GM10248 (cell line): ENCODE measurements at regions of chr11 and their contacts with region 1.

Region 1: DNA sequence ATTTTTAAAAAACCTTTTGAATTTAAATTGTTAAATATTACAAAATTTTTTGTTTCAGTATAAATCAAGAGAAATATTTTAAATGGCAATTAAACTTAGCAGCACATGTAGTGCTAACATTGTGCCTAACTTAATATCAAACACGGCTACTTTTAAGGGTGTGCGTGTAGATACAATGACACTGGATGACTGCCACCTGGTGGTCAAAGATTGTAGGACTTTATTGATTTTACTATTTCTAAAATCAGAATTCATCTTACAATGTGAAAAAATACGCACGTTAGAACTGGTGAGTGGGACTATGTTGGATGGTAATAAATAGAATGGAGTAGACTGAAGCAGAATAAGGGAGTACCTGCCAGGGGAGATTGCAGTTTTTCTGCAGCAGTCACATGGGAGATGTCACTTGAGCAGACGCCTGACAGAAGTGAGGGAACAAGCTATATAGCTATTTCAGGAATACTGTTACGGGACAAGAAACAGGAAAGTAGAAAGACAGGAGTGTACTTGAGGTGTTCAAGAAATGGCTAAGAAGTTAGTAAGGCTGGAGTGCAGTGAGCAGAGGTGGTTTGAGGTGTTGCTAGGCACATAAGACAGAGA is 52.9 kb downstream of the UVRAG start:
- DNase-seq: peak; percentile 42
- CTCF ChIP-seq: peak; percentile 47

Region 2: DNA sequence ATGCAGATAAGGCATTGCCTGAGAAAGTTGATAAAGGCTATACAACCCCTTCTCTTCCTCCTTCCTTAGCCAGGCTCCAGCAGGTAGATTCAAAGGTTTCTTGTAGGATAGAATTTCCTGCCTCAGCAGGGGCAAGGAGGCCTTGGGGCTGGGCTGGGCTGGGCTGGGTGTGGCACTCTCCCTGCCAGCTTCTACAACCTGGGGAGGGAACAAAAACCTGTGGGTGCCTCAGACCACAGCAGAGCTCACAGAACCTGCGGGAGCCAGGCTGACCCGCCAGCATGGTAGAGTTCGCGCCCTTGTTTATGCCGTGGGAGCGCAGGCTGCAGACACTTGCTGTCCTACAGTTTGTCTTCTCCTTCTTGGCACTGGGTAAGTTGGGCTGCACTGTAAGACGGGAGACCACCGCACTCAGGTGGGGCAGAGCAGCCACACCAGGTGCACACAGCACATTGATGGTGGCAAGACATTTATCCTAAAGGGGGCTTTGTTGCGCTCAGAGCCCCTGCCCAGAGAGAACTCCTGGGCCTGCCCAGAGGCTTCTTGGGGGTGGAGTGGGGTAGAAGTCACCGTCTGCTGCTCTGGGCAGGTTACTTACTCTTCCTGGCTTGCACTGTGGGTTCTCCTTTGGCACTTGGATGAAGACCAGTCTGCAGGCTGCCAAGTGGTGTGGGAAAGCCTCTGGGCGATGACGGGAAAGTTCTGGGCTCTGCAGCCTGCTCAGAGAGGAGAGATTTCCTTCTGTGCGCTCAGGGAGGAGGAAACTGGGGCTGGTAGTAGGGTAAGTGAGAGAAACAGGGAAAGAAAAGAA is 150.1 kb before region 1 on chr11 and contains the start of gene MOGAT2:
- CTCF ChIA-PET with region 1: interaction called, 19 read pairs
- POLR2A ChIA-PET with region 1: no interaction called
- DNase-seq: no peak
- CTCF ChIP-seq: no peak

Region 3: GRCh38 chr11:75786101-75786736 is 81.7 kb before region 1 on chr11:
- CTCF ChIA-PET with region 1: interaction called, 16 read pairs
- POLR2A ChIA-PET with region 1: no interaction called
- DNase-seq: peak; percentile 65
- CTCF ChIP-seq: no peak

Region 4: DNA sequence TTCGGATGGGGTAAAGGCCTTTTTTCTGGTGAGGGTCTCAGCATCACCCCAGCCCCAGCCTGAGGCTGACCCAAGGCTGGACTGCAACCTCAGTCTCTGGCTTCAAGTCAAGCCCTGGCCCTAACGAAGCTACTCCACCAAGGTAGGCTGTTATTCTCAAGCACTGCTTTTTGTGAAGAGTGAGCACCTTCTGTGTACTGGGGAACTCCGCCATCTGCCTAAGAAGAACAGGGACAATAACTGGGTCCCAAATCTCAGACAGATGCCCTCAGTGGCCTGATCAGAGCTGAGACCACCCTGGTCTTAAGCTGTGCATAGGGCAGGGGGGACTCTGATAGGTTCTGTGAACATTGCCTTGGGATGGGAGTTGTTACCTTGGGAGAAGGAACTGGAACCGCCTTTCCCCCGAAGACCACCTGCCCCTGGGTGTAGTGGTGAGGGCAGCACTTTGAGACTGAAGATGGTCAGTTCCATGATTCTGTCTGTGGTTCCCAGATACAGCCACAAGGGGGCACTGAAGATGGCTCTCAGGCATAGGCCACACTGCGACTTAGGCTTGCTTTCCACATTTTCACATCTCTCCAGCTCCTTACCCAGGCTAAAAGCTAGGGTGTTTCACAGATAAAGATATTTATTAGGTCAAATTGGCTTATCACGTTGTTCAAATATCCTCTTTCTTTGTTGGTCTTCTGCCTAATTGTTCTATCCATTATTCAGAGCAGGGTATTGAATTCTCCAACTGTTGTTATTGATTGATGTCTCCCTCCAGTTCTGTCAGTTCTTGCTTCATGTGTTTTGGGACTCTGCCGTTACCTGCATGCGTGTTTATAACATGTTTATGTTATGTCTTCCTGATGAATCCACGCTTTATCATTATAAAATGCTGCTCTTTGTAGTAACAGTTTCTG is 64.7 kb before region 1 on chr11:
- CTCF ChIA-PET with region 1: interaction called, 167 read pairs
- POLR2A ChIA-PET with region 1: no interaction called
- DNase-seq: peak; percentile 81
- CTCF ChIP-seq: peak; percentile 88

Region 5: GRCh38 chr11:75814686-75815344 is 53.1 kb before region 1 on chr11 and contains the start of gene UVRAG:
- CTCF ChIA-PET with region 1: interaction called, 59 read pairs
- POLR2A ChIA-PET with region 1: no interaction called
- DNase-seq: peak; percentile 96
- CTCF ChIP-seq: no peak

Region 6: DNA sequence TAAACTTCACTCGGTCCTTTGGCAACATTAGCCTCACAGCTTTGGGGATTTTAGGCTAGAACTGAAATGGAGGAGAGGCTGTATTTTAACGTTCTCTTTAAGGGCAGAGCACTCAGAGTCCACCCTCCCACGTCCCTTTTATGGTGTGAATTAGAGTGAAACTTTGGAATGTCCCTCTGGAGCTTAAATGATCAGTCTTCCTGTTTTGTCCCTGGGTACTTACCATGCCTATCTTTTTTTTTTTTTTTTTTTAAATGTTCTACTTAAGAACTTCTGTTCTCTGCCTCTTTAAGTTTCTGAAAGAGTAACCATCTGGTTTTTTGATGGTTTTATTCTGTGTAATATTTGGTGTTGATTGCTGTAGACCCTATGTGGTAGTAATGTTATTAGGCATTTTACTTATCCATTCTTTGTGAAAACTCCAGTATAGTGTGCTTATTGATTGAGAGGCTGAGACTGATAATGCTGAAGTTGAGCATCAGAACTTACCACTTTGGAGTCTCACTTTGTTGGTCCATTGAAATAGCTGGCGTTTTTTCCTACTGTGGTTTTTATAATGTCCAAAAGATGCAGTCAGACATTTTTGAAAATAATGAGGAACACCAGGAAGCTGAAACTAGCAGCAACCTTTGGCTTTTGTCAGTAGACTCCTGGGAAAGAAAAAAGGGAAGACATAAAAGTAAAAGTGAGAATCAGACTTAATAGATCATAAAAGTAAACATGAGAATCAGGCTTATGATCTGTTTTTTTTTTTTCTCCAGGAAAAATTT is 41.2 kb before region 1 on chr11:
- CTCF ChIA-PET with region 1: interaction called, 11 read pairs
- POLR2A ChIA-PET with region 1: interaction called, 4 read pairs
- DNase-seq: no peak
- CTCF ChIP-seq: no peak

Region 7: DNA sequence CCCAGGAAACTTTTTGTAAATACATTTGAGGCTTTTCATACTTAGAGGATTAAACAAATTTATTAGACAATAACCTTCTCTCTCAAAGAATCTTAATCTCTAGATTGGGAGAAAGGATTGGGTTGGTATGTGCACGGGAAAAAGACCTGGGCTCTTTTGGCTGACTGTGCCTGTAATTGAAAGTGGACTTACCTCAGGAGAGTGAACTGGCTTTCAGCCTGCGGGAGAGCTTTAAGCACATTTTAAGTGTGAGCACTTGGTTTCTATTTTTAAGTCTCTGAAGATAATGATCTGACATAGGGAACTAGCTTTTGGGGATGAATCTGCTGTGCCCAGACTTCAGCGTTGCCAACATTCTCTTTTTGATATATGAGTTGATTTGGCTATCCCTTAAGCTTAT is 17.1 kb before region 1 on chr11:
- CTCF ChIA-PET with region 1: interaction called, 92 read pairs
- POLR2A ChIA-PET with region 1: no interaction called
- DNase-seq: no peak
- CTCF ChIP-seq: no peak